WTC11 (cell line): ENCODE measurements at regions of chr22 and their contacts with region 1.

Region 1: GRCh38 chr22:38051900-38052862 is 5.0 kb upstream of the PICK1 start:
- DNase-seq: peak; percentile 92
- ATAC-seq: peak; percentile 84
- H3K4me3 Mint-ChIP-seq: no peak overlapping the region
- H3K27ac Mint-ChIP-seq: peak overlapping the region; percentile 23; the same call in 1 of the 2 replicates
- H3K4me1 Mint-ChIP-seq: peaks cover 7% of the 10 kb centered on the region
- H3K27me3 Mint-ChIP-seq: no peaks in the 10 kb centered on the region; the same call in 1 of the 2 replicates
- CTCF ChIP-seq: peak; percentile 83

Region 2: DNA sequence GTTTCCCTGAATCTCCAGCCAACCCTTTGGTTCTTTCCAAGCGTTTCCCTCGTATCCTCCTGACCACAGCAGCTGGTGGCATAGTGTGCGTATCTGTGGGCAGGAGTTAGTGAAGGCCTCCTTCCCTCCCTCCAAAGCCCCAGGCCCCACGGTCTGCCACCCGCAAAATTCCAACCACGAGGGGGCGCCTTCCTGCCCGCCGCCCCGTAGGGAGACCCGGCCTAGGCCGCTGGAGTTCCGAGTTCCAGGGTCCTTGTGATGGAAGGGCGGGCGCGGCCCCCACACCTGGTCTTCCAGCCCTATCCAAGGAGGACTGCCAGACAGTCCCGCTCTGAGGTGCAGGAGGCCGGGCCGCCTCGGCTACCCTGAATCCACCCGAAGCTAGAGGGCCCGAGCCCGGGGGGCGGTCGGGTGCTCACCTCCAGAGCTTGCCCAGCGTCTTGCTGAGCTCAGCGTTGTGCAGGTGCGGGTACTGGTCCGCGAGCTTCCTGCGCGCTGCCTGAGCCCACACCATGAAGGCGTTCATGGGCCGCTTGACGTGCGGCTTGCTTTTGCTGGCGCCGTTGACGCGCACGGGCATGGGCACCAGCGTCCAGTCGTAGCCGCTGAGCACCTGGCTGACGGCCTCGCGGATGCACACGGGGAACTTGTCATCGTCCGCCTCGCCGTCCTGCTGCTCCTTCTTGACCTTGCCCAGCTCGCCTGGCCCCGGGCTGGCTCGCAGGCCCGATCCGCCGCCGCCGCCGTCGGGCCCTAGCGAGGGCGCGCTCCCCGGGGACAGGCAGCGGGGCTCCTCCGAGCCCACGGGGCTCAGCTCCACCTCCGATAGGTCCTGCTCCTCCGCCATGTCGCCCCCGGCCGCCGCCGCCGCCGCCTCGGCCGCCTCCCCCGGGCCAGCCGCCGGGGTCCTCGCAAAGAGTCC is 69.0 kb before region 1 on chr22:
- CTCF ChIA-PET with region 1: interaction called, 42 read pairs
- POLR2A ChIA-PET with region 1: no interaction called
- DNase-seq: peak; percentile 82
- ATAC-seq: peak; percentile 59
- H3K4me3 Mint-ChIP-seq: peak overlapping the region; percentile 69
- H3K27ac Mint-ChIP-seq: no peak overlapping the region
- H3K4me1 Mint-ChIP-seq: peaks cover 22% of the 10 kb centered on the region
- H3K27me3 Mint-ChIP-seq: peaks cover 19% of the 10 kb centered on the region
- CTCF ChIP-seq: peak; percentile 87

Region 3: DNA sequence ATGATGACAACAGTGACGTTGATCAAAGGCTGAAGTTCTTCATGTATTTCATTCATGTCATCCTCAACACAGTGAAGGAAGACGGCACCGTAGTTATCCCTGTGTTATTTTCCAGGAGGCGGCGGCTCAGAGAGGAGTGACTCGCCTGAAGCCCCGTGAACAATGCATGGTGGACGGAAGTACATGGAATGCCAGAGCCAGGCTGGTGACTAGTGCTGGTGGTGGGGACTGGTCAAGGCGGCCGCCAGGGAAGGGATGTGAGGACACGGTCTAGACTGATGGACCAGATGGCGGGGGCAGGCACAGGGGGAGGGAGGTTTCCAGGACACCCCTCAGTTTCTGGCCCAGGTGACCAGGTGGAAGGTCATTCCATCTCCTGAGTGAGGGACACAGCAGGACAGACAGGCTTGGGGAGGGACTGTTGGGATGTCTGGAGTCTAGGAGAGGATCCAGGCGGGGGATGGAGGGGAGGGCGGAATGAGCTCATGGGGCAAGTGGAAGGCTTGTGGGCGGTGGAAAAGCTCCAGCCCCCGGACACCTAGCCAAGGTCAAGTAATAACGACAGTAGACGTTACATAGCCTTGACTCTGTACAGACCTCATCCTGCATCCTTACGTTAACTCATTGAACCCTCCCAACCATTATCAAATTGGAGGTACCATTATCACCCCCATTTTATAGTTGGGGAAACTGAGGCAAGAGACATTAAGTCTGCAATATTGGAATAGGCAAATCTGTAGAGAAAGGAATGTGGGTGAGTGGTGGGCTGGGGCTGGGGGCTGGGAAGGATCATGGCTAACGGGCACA is 11.0 kb before region 1 on chr22:
- CTCF ChIA-PET with region 1: interaction called, 13 read pairs
- POLR2A ChIA-PET with region 1: interaction called, 6 read pairs
- DNase-seq: no peak
- ATAC-seq: no peak
- H3K4me3 Mint-ChIP-seq: no peak overlapping the region
- H3K27ac Mint-ChIP-seq: no peak overlapping the region
- H3K4me1 Mint-ChIP-seq: no peaks in the 10 kb centered on the region
- H3K27me3 Mint-ChIP-seq: no peaks in the 10 kb centered on the region; the same call in 1 of the 2 replicates
- CTCF ChIP-seq: no peak

Region 4: GRCh38 chr22:38097557-38098409 is 45.6 kb after region 1 on chr22:
- CTCF ChIA-PET with region 1: interaction called, 91 read pairs
- POLR2A ChIA-PET with region 1: interaction called, 5 read pairs
- DNase-seq: peak; percentile 83
- ATAC-seq: peak; percentile 93
- H3K4me3 Mint-ChIP-seq: peak overlapping the region; percentile 72
- H3K27ac Mint-ChIP-seq: no peak overlapping the region
- H3K4me1 Mint-ChIP-seq: peaks cover 14% of the 10 kb centered on the region
- H3K27me3 Mint-ChIP-seq: peaks cover 7% of the 10 kb centered on the region
- CTCF ChIP-seq: peak; percentile 75

Region 5: DNA sequence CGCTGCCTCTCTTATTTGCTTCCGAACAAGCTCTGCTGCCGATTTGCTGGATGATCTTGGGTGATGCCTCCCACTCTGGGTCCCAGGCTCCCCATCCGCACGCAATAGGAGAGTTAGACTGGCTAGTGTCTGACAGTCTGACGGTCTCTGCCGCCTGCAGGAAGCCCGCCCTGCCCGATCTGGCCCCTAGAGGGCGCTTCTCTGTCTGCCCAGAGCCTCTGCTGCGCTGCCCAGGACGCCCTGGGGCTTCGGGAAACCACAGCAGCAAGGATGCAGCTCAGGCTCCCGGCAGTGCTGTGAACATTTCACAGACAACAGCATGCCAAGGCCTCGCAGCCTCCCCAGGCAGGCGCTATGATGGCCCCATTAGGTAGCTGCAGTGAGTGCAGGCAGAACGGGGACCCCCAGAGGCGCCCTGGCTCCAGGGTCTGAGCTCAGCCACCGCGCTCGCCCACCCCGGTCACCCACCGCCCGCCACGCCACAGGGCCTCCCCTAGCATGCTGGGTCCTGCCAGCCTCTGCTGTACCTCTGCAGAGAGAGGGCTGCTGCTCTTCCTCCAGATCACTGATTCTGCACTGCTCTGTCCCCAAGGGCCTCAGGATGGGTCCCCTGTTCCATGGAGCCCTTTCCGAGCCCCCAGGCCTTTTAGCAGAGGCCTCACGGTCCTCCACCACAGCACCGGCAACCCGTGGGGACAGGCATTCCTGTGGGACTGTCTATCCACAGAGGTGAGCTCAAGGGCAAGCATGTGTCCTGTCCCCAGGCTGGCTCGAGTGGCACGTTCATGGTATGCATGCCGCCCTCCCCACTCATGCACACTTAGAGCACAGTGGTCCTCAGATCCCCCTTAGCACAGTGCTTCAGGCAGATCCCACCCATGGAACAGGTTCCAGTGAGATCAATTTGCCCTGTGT is 62.6 kb after region 1 on chr22:
- CTCF ChIA-PET with region 1: interaction called, 35 read pairs
- POLR2A ChIA-PET with region 1: no interaction called
- DNase-seq: peak; percentile 95
- ATAC-seq: peak; percentile 90
- H3K4me3 Mint-ChIP-seq: no peak overlapping the region
- H3K27ac Mint-ChIP-seq: 0 out of 2 replicates have a peak overlapping the region, but pooled peaks have one; percentile 27
- H3K4me1 Mint-ChIP-seq: peaks cover 7% of the 10 kb centered on the region
- H3K27me3 Mint-ChIP-seq: no peaks in the 10 kb centered on the region; the same call in 1 of the 2 replicates
- CTCF ChIP-seq: peak; percentile 95

Region 6: GRCh38 chr22:38151126-38151500 is 98.9 kb after region 1 on chr22:
- CTCF ChIA-PET with region 1: interaction called, 46 read pairs
- POLR2A ChIA-PET with region 1: no interaction called
- DNase-seq: no peak
- ATAC-seq: no peak
- H3K4me3 Mint-ChIP-seq: no peak overlapping the region
- H3K27ac Mint-ChIP-seq: no peak overlapping the region
- H3K4me1 Mint-ChIP-seq: peaks cover 18% of the 10 kb centered on the region
- H3K27me3 Mint-ChIP-seq: no peaks in the 10 kb centered on the region
- CTCF ChIP-seq: no peak

Region 7: GRCh38 chr22:38262051-38262795 is 210.0 kb after region 1 on chr22:
- CTCF ChIA-PET with region 1: interaction called, 10 read pairs
- POLR2A ChIA-PET with region 1: no interaction called
- DNase-seq: peak; percentile 78
- ATAC-seq: peak; percentile 85
- H3K4me3 Mint-ChIP-seq: no peak overlapping the region
- H3K27ac Mint-ChIP-seq: peak overlapping the region; percentile 95
- H3K4me1 Mint-ChIP-seq: peaks cover 56% of the 10 kb centered on the region
- H3K27me3 Mint-ChIP-seq: no peaks in the 10 kb centered on the region
- CTCF ChIP-seq: no peak